ENCODE measurements at regions of chr1 and their contacts with region 1.

Region 1: DNA sequence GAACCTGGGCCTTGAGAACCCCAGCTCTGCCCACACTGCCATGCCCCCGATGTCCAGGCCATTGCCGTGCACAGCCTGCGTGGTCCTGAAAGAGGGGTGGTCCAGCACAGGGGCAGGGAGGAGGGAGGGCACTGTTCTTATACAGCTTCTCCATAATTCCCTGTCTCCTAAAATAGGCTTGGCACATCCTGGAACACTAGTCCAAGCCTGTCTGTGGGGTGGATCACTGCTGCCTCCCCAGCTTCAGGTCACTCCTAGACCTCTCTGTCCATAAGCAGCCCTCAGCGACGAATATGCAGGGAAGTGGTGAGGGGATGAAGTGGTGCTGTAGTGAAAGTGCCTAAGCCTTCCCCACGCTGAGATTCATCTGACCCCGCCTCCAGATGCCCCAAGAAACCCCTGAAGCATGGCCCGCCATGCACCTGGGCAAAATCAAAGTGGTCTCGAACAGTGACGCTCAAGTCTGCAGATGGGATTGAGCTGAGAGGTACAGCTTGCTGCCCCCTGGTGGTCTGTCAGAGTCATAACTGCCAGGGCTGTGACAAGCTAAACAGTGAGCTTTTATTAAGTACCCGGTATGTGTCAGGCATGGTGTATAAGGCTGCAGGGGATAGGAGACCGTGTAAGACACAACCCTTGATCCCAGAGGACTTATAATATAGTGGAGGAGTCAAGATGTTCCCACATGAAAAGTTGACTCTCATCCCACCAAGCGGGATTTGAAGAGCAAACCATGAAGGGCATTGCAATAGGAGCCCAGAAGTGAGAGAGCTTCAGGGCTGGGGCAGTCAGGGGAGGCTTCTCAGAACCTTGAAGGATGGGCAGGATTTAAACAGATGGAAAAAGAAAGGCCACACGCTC is 66.6 kb downstream of the FAM163A start:
- DNase-seq: peak; percentile 81
- H3K4me3 Mint-ChIP-seq: no peak overlapping the region
- H3K27ac Mint-ChIP-seq: no peak overlapping the region
- H3K4me1 Mint-ChIP-seq: peaks cover 10% of the 10 kb centered on the region
- H3K27me3 Mint-ChIP-seq: no peaks in the 10 kb centered on the region

Region 2: GRCh38 chr1:179365320-179366092 is 444.2 kb before region 1 on chr1 and contains the start of gene AXDND1:
- CTCF ChIA-PET with region 1: no interaction called
- intact Hi-C with region 1: loop called (anchors 10 kb)
- DNase-seq: peak; percentile 94
- H3K4me3 Mint-ChIP-seq: peak within 1 kb of the TSS; percentile 93
- H3K27ac Mint-ChIP-seq: peak within 1 kb of the TSS; percentile 100
- H3K4me1 Mint-ChIP-seq: peaks cover 21% of the 10 kb centered on the region
- H3K27me3 Mint-ChIP-seq: no peaks in the 10 kb centered on the region
- total RNA-seq, gene AXDND1: 0.57 to 0.67 TPM

Region 3: DNA sequence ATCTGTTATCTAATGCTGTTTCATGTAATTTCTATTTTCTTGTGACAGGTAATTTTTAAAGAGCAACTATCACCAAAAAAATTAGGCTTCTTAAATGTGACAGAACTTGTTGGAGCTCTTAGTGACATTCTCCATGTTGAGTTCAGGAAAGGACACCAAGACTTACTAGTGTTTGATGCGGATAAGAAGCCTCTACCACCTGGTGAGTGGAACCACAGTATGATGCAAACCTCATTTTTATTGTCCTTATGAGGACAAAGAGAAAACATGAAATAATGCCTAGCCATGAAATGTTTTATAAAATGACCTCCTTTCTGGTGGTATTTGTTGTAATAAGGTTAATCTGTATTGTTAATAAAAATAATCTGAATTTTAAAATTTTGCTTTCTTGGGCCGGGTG is 179.0 kb before region 1 on chr1:
- CTCF ChIA-PET with region 1: no interaction called
- intact Hi-C with region 1: no loop called
- DNase-seq: no peak
- H3K4me3 Mint-ChIP-seq: no peak overlapping the region
- H3K27ac Mint-ChIP-seq: no peak overlapping the region
- H3K4me1 Mint-ChIP-seq: no peaks in the 10 kb centered on the region
- H3K27me3 Mint-ChIP-seq: no peaks in the 10 kb centered on the region

Region 4: DNA sequence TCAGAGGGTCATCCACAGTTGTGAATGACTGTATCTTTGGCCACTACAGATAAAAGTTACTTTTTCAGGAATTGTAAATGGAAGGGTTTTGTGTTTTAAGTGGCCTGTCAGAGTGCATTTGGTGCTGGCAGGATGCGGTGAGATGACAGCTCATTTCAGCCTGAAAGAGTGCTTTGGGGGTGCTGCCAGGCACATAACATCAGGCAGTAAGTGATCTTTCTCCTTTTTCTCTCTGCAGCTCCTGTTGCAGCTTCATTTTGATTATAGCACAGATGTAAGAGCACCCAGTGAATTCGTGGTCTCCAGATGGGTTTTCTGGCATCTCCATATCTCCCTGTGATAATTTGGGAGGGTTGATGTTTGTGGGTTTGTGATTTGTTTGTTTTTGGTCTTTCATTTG is 81.5 kb before region 1 on chr1:
- CTCF ChIA-PET with region 1: interaction called, 19 read pairs
- intact Hi-C with region 1: no loop called
- DNase-seq: no peak
- H3K4me3 Mint-ChIP-seq: no peak overlapping the region
- H3K27ac Mint-ChIP-seq: no peak overlapping the region
- H3K4me1 Mint-ChIP-seq: no peaks in the 10 kb centered on the region
- H3K27me3 Mint-ChIP-seq: peaks cover 3% of the 10 kb centered on the region

Region 5: GRCh38 chr1:179785031-179785431 is 24.7 kb before region 1 on chr1:
- CTCF ChIA-PET with region 1: interaction called, 31 read pairs
- intact Hi-C with region 1: no loop called
- DNase-seq: no peak
- H3K4me3 Mint-ChIP-seq: no peak overlapping the region
- H3K27ac Mint-ChIP-seq: no peak overlapping the region
- H3K4me1 Mint-ChIP-seq: no peaks in the 10 kb centered on the region
- H3K27me3 Mint-ChIP-seq: peaks cover 2% of the 10 kb centered on the region

Region 6: GRCh38 chr1:179831852-179832699 is 22.3 kb after region 1 on chr1:
- CTCF ChIA-PET with region 1: interaction called, 28 read pairs
- intact Hi-C with region 1: loop called (anchors 1 kb)
- DNase-seq: peak; percentile 57
- H3K4me3 Mint-ChIP-seq: no peak overlapping the region
- H3K27ac Mint-ChIP-seq: peak overlapping the region; percentile 15
- H3K4me1 Mint-ChIP-seq: peaks cover 30% of the 10 kb centered on the region
- H3K27me3 Mint-ChIP-seq: no peaks in the 10 kb centered on the region

Region 7: DNA sequence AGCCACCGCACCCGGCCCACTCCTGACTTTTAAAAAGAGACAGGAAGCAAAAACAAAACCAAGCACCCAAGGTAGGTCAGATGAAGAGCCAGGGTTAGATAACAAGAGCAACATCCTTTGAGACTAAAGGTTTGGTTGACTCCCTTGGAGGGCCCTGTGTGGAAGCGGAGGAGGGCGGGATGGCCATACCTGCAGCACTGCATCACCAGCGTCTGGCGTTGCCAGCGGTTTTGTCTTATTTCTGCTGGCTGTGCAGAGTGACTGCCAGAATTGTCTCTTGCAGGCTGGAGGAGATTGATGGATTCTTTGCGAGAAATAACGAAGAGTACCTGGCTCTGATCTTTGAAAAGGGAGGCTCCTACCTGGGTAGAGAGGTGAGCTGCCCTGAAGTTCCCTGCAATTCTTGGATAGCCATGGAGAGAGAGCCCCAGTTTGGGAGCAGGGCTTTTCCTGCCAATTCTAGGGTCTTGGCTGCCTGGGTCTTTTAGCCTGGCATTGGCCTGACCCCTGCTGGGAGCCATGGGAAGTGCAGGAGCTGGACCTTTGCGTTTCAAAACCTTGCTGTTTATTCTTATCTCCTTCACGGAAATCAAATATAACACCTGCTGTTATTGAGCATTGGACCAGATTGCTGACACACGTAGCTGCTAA is 368.9 kb after region 1 on chr1:
- CTCF ChIA-PET with region 1: interaction called, 25 read pairs
- intact Hi-C with region 1: loop called (anchors 1 kb)
- DNase-seq: peak; percentile 79
- H3K4me3 Mint-ChIP-seq: no peak overlapping the region
- H3K27ac Mint-ChIP-seq: no peak overlapping the region
- H3K4me1 Mint-ChIP-seq: no peaks in the 10 kb centered on the region
- H3K27me3 Mint-ChIP-seq: no peaks in the 10 kb centered on the region

Measured in activated naive CD4-positive, alpha-beta T cell treated with anti-CD3 and anti-CD28 coated beads for 36 hours (primary cell).